ENCODE measurements at regions of chr1 and their contacts with region 1.

Region 1: GRCh38 chr1:246280551-246280950 is 226.5 kb downstream of the SMYD3 start:
- DNase-seq: no peak
- H3K4me3 ChIP-seq: no peak overlapping the region
- H3K27ac ChIP-seq: no peak overlapping the region
- H3K4me1 ChIP-seq: no peaks in the 10 kb centered on the region
- H3K27me3 ChIP-seq: no peaks in the 10 kb centered on the region
- CTCF ChIP-seq: peak in 1 of 2 donors; percentile 40

Region 2: GRCh38 chr1:245079021-245079609 is 1201.4 kb before region 1 on chr1:
- CTCF ChIA-PET with region 1: no interaction called
- dilution Hi-C with region 1: no loop called
- in situ Hi-C with region 1: no loop called
- intact Hi-C with region 1: loop called (anchors 10 kb)
- DNase-seq: peak; percentile 26
- H3K4me3 ChIP-seq: no peak overlapping the region
- H3K27ac ChIP-seq: no peak overlapping the region
- H3K4me1 ChIP-seq: no peaks in the 10 kb centered on the region
- H3K27me3 ChIP-seq: no peaks in the 10 kb centered on the region
- CTCF ChIP-seq: peak; percentile 81 to 90

Region 3: DNA sequence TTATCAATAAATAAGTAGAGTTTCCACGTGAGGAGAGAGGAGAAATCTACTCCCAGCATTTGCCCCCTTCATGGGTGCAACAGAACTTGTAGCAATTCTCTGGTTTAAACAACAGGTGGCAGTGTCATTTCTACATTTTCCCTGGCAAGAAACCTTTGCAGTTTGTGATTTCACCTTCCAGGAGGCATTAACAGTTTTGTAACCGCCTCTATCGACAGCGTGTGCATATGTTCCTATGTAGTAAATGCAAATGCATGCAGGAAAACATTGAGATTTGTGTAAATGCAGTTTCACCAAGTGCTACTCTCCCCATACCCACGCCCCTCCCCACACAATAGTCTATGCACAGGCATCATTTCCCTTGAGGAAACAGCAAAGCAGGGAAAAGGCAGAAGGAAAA is 268.2 kb before region 1 on chr1:
- CTCF ChIA-PET with region 1: no interaction called
- dilution Hi-C with region 1: no loop called
- in situ Hi-C with region 1: loop called in 1 of 2 experiments (anchors 25 kb)
- intact Hi-C with region 1: loop called (anchors 2 kb)
- DNase-seq: peak; percentile 16
- H3K4me3 ChIP-seq: no peak overlapping the region
- H3K27ac ChIP-seq: no peak overlapping the region
- H3K4me1 ChIP-seq: peaks cover 6% of the 10 kb centered on the region
- H3K27me3 ChIP-seq: no peaks in the 10 kb centered on the region
- CTCF ChIP-seq: peak; percentile 44 to 71